Naive thymus-derived CD4-positive, alpha-beta T cell (primary cell): ENCODE measurements at regions of chr6 and their contacts with region 1.

Region 1: DNA sequence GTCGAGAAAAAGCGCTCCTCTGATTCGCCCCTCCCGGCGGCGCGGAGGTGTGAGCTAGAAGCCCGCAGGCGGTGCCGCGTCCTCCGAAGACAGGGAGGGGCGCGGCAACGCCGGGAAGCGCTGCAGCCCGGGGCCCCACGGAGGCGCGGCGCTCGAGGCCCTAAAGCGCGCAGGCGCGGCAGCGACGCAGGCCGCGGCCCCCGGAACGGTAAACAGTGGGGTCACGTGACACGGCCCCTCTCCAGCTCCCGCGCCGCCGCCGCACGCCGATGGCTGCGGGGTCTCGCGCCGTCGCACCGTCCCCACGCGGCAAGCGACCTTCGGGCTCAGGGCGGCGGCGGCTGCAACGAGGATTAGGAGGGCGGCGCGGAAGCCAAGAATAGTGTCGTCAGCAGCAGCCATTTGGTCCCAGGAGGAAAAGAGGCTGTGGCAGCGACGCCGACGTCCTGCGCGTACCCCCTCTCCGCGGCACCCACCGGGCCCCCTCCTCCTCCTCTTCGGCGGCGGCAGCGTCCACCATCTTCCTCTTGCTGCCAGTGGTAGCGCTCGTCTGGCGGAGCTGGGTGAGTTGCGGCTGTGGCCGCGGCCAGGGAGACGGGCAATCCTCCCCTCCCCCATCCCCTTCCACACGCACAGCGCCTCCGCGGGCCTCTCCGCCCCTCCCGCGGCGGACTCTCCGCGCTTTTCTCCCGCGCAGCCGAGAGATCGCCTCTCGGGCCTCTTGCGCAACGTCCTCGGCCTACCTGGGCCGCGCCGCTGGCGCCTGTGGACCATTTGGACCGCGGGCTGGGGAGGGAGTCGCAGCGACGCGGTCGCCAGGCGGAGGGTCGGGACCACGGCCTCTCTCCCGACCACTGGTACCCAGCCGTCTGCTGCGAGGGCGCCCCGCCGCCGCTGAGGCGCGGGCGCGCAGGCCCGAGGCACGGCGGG is at the start of gene PHF3:
- DNase-seq: peak; percentile 87 to 95 (median 92)
- ATAC-seq: peak; percentile 94
- H3K4me3 ChIP-seq: peak within 1 kb of the TSS; percentile 75
- H3K4me3 Mint-ChIP-seq: peak within 1 kb of the TSS; percentile 95 to 100 (median 100)
- H3K27ac ChIP-seq: peak within 1 kb of the TSS; percentile 98
- H3K27ac Mint-ChIP-seq: peak within 1 kb of the TSS; percentile 95 to 100 (median 98)
- H3K4me1 ChIP-seq: peaks cover 27 to 33% of the 10 kb centered on the region in 2 donors
- H3K4me1 Mint-ChIP-seq: peaks cover 34 to 66% (median 54%) of the 10 kb centered on the region in 7 donors
- H3K27me3 ChIP-seq: no peaks in the 10 kb centered on the region
- H3K27me3 Mint-ChIP-seq: peaks cover 0 to 5% (median 0%) of the 10 kb centered on the region in 5 donors
- total RNA-seq, gene PHF3: 56.8 to 141 (median 108) TPM

Region 2: DNA sequence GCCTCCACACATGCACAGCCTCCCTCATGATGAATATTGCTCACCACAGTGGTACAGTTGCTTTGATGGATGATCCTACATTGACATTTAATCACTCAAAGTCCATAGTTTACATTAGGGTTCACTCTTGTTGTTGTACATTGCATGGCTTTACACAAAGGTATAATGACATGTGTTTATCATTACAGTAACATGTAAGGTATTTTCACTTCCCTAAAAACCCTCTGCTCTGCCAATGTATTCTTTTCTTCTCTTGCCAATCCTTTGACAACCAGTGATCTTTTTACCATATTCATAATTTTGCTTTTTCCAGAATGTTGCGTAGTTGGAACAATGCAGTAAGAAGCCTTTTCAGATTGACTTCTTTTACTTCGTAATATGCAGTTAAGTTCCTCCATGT is 1183.3 kb before region 1 on chr6:
- CTCF ChIA-PET with region 1: no interaction called
- POLR2A ChIA-PET with region 1: no interaction called
- intact Hi-C with region 1: no loop called
- DNase-seq: no peak
- ATAC-seq: no peak
- H3K4me3 ChIP-seq: no peak overlapping the region
- H3K4me3 Mint-ChIP-seq: no peak overlapping the region
- H3K27ac ChIP-seq: no peak overlapping the region
- H3K27ac Mint-ChIP-seq: no peak overlapping the region
- H3K4me1 ChIP-seq: no peaks in the 10 kb centered on the region
- H3K4me1 Mint-ChIP-seq: no peaks in the 10 kb centered on the region
- H3K27me3 ChIP-seq: no peaks in the 10 kb centered on the region
- H3K27me3 Mint-ChIP-seq: no peaks in the 10 kb centered on the region

Region 3: GRCh38 chr6:63527658-63528514 is 108.0 kb before region 1 on chr6:
- CTCF ChIA-PET with region 1: no interaction called
- POLR2A ChIA-PET with region 1: no interaction called
- intact Hi-C with region 1: loop called in 1 of 2 experiments (anchors 5 kb)
- DNase-seq: no peak
- ATAC-seq: no peak
- H3K4me3 ChIP-seq: no peak overlapping the region
- H3K4me3 Mint-ChIP-seq: peak overlapping the region in 1 of 10 donors; percentile 23
- H3K27ac ChIP-seq: no peak overlapping the region
- H3K27ac Mint-ChIP-seq: peak overlapping the region in 1 of 9 donors; percentile 71
- H3K4me1 ChIP-seq: no peaks in the 10 kb centered on the region
- H3K4me1 Mint-ChIP-seq: peaks cover 2 to 43% (median 10%) of the 10 kb centered on the region in 7 donors
- H3K27me3 ChIP-seq: no peaks in the 10 kb centered on the region
- H3K27me3 Mint-ChIP-seq: no peaks in the 10 kb centered on the region

Region 4: DNA sequence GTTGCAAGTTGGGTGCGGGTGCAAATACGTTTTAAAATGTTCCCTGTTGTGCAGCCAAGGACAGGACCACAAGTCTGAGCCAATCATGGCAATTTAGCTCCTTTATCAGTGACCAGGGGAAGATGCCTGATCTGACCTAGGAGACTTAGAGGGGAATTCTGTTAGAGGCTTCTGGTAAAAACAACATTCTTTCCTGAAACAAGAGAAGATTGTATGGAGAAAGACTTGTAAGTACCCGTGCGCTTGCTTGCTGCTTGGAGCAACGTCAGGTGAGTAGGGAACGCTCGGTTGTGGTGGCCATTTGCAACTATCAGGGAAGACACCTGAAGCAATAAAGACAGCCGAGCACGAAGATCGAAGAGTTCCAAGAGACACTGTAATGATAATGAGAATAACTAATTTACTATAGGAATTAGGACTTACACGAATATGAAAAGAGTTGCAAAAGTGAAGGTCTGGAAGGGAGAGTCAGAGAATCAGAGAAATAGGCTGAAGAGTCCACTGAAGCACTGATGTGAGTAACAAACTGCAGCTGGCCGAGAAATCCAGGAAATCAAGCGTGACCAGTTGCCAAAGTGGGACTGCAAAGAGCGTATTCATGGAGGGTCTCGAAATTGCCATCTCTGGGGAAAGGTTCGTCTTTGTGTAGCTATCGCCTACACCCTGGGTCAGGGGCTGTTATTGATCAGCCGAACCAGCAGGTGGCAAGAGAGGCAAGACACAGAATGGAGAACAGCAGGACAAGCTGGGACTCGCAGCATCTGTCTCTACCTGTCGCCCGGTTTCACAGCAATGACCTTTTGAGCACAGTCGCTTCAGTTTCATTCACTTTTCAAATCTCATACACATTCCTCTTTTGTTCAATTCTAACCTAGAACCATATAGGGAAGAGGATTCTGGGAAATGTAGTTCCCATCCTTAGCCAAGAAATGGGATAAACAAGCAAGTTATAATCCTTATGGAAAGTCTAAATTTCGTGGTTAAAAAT is 37.5 kb before region 1 on chr6:
- CTCF ChIA-PET with region 1: interaction called, 8 read pairs
- POLR2A ChIA-PET with region 1: interaction called, 23 read pairs
- intact Hi-C with region 1: loop called (anchors 1 kb)
- DNase-seq: peak; percentile 39 to 80 (median 74)
- ATAC-seq: peak; percentile 99
- H3K4me3 ChIP-seq: peak overlapping the region; percentile 53
- H3K4me3 Mint-ChIP-seq: peak overlapping the region; percentile 73 to 93 (median 88)
- H3K27ac ChIP-seq: no peak overlapping the region
- H3K27ac Mint-ChIP-seq: peak overlapping the region in 5 of 9 donors; percentile 3 to 73 (median 52)
- H3K4me1 ChIP-seq: peaks cover 0 to 4% of the 10 kb centered on the region in 2 donors
- H3K4me1 Mint-ChIP-seq: peaks cover 7 to 20% (median 18%) of the 10 kb centered on the region in 7 donors
- H3K27me3 ChIP-seq: no peaks in the 10 kb centered on the region
- H3K27me3 Mint-ChIP-seq: peaks cover 0 to 22% (median 5%) of the 10 kb centered on the region in 5 donors

Region 5: GRCh38 chr6:63685446-63686379 is 49.9 kb after region 1 on chr6:
- CTCF ChIA-PET with region 1: no interaction called
- POLR2A ChIA-PET with region 1: interaction called, 4 read pairs
- intact Hi-C with region 1: loop called (anchors 2 to 5 kb)
- DNase-seq: no peak
- ATAC-seq: peak; percentile 65
- H3K4me3 ChIP-seq: no peak overlapping the region
- H3K4me3 Mint-ChIP-seq: peak overlapping the region in 1 of 10 donors; percentile 9
- H3K27ac ChIP-seq: no peak overlapping the region
- H3K27ac Mint-ChIP-seq: peak overlapping the region in 7 of 9 donors; percentile 2 to 84 (median 40)
- H3K4me1 ChIP-seq: no peaks in the 10 kb centered on the region
- H3K4me1 Mint-ChIP-seq: peaks cover 32 to 64% (median 50%) of the 10 kb centered on the region in 7 donors
- H3K27me3 ChIP-seq: no peaks in the 10 kb centered on the region
- H3K27me3 Mint-ChIP-seq: no peaks in the 10 kb centered on the region

Region 6: GRCh38 chr6:63714091-63714490 is 78.2 kb after region 1 on chr6:
- CTCF ChIA-PET with region 1: no interaction called
- POLR2A ChIA-PET with region 1: interaction called, 4 read pairs
- intact Hi-C with region 1: loop called (anchors 5 kb)
- DNase-seq: no peak
- ATAC-seq: no peak
- H3K4me3 ChIP-seq: no peak overlapping the region
- H3K4me3 Mint-ChIP-seq: no peak overlapping the region
- H3K27ac ChIP-seq: no peak overlapping the region
- H3K27ac Mint-ChIP-seq: no peak overlapping the region
- H3K4me1 ChIP-seq: no peaks in the 10 kb centered on the region
- H3K4me1 Mint-ChIP-seq: peaks cover 0 to 21% (median 7%) of the 10 kb centered on the region in 7 donors
- H3K27me3 ChIP-seq: no peaks in the 10 kb centered on the region
- H3K27me3 Mint-ChIP-seq: no peaks in the 10 kb centered on the region

Region 7: DNA sequence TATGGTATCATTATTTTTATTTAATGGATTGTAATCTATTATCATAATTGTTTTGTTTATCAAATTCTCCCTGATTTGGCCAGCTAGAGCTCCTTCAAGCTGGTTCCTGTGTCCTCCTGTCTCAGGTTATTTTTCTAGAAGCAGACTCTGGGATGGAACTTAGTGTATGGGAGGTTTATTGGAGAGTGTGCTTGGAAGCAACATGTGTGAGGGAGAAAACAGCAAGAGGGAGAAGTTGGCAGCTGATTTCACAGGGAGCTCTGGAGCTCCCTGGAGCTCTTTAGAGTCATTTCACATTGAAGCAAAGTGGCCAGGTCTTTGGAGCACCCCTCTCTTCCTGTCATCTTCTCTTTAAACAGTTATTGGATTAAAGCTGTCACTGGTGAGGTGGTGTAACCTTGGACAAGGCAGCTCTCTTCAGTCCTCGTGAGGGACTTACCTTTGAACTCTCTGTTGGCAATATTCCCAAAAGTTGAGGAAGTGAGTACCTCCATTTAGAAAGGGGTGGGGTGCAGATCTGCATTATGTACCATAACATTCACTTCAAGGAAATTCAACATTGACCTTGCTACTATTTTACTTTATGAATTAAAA is 103.3 kb after region 1 on chr6:
- CTCF ChIA-PET with region 1: no interaction called
- POLR2A ChIA-PET with region 1: no interaction called
- intact Hi-C with region 1: no loop called
- DNase-seq: no peak
- ATAC-seq: no peak
- H3K4me3 ChIP-seq: no peak overlapping the region
- H3K4me3 Mint-ChIP-seq: no peak overlapping the region
- H3K27ac ChIP-seq: no peak overlapping the region
- H3K27ac Mint-ChIP-seq: peak overlapping the region in 1 of 9 donors; percentile 17
- H3K4me1 ChIP-seq: no peaks in the 10 kb centered on the region
- H3K4me1 Mint-ChIP-seq: peaks cover 0 to 5% (median 0%) of the 10 kb centered on the region in 7 donors
- H3K27me3 ChIP-seq: no peaks in the 10 kb centered on the region
- H3K27me3 Mint-ChIP-seq: no peaks in the 10 kb centered on the region